ENCODE measurements at regions of chr2 and their contacts with region 1.

Region 1: DNA sequence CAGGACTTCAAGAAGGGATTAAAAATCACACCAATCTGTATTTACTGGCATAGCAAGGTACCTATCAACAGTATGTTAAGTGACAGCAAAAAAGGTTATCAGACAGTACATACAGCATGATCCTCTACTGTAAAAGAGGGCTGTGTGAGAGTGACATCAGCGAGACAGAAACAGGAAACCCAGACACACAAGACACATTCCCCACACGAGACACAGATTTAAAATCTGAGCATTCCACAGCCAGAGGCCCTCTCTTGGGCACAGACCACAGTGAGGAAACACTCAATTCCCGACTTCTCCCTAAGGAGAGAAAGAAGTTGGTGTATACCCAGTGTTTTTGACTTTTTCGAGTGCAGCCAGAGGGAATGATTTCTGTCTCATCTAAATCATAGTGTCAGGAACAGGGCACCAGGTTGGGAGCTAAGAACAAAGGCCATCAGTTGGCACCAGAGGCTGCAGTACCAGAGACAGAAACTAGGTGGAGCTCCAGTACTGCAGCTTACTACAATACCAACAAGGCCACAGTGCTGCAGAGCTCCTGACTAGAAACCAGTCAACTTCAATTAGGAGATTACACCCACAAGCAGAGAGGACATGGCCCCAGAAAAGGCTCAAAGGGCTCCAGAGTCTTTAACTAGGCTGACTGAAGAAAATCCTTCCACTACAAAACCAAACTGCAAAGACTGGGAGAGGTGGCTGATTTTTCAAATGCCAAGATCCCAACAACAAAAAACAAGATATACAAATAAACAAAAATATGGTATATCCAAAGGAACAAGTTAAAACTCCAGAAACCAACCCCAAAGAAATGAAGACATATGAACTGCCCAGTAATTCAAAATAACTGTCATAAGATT is 41.0 kb downstream of the UNC50 start:
- DNase-seq: peak; percentile 39 to 77 (median 69)
- H3K4me3 ChIP-seq: no peak overlapping the region
- H3K27ac ChIP-seq: no peak overlapping the region
- H3K4me1 ChIP-seq: no peaks in the 10 kb centered on the region
- H3K27me3 ChIP-seq: no peaks in the 10 kb centered on the region
- CTCF ChIP-seq: peak; percentile 77 to 87 (median 84)
- EP300 ChIP-seq: no peak
- POLR2A ChIP-seq: no peak

Region 2: DNA sequence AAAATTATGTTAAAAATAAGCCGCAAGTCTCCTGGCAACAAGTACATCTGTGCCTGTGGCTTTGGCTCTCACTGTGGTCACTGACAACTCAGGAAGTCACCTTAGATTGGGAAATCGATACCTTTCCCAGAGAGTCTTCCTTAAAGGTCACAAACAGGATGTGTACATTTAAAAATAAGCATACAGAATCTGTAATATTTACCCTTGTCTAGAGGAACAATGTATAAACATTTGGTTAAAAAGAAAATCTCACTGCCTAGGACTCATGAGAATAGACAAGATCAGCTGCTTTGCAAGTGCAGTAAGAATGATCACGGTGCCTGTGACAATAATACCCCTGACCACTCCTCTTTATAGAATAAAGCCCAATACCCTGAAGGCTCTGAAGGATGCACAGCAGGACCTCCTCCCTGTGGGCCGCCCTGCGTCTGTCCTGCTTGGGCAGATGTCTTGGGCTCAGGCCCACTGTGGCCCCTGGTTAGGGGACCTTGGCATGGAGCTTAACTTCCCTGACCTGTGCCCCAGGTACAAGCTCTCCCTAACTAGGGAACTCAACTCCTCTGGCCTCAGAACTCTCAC is 179.5 kb after region 1 on chr2:
- intact Hi-C with region 1: loop called in 1 of 4 experiments (anchors 5 kb)
- DNase-seq: no peak
- H3K4me3 ChIP-seq: no peak overlapping the region
- H3K27ac ChIP-seq: no peak overlapping the region
- H3K4me1 ChIP-seq: no peaks in the 10 kb centered on the region
- H3K27me3 ChIP-seq: no peaks in the 10 kb centered on the region
- CTCF ChIP-seq: no peak
- EP300 ChIP-seq: no peak
- POLR2A ChIP-seq: no peak